ENCODE measurements at regions of chr10 and their contacts with region 1.

Region 1: GRCh38 chr10:76036111-76036940 is 604.9 kb downstream of the LRMDA start:
- DNase-seq: peak; percentile 99
- ATAC-seq: peak; percentile 83
- H3K4me3 ChIP-seq: peak overlapping the region; percentile 27
- H3K27ac ChIP-seq: peak overlapping the region; percentile 6
- H3K4me1 ChIP-seq: peaks cover 23% of the 10 kb centered on the region
- H3K27me3 ChIP-seq: peaks cover 34% of the 10 kb centered on the region
- CTCF ChIP-seq: no peak

Region 2: GRCh38 chr10:75530337-75530736 is 506.0 kb before region 1 on chr10:
- CTCF ChIA-PET with region 1: no interaction called
- POLR2A ChIA-PET with region 1: no interaction called
- intact Hi-C with region 1: loop called (anchors 10 kb)
- DNase-seq: peak; percentile 98
- ATAC-seq: peak; percentile 69
- H3K4me3 ChIP-seq: no peak overlapping the region
- H3K27ac ChIP-seq: peak overlapping the region; percentile 85
- H3K4me1 ChIP-seq: peaks cover 45% of the 10 kb centered on the region
- H3K27me3 ChIP-seq: no peaks in the 10 kb centered on the region
- CTCF ChIP-seq: no peak

Region 3: GRCh38 chr10:75717126-75717916 is 319.0 kb before region 1 on chr10:
- CTCF ChIA-PET with region 1: interaction called, 3 read pairs
- POLR2A ChIA-PET with region 1: no interaction called
- intact Hi-C with region 1: loop called (anchors 2 kb)
- DNase-seq: peak; percentile 74
- ATAC-seq: peak; percentile 76
- H3K4me3 ChIP-seq: no peak overlapping the region
- H3K27ac ChIP-seq: no peak overlapping the region
- H3K4me1 ChIP-seq: peaks cover 7% of the 10 kb centered on the region; the same call in 1 of the 2 replicates
- H3K27me3 ChIP-seq: peaks cover 44% of the 10 kb centered on the region
- CTCF ChIP-seq: peak; percentile 47; the same call in 1 of the 2 replicates

Region 4: DNA sequence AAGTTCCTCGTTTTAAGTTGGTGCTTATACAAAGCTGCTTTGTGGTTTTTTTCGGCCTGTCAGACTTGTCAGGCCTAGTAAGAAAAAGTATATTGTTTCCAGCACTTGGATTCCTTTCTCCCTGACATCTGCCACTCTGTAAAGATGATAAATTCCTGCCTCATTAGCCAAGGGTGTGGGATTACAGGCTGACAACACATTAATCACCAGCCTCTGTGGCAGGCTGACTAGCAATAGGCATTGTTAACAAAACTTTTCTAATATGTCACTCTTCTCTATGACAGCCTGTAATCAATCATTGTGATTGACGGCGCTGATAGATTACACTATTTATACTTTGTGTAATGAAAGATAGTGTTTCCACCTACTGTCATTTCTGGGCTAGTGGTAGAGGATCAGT is 77.6 kb after region 1 on chr10:
- CTCF ChIA-PET with region 1: no interaction called
- POLR2A ChIA-PET with region 1: interaction called, 3 read pairs
- intact Hi-C with region 1: loop called (anchors 2 kb)
- DNase-seq: peak; percentile 98
- ATAC-seq: peak; percentile 76
- H3K4me3 ChIP-seq: peak overlapping the region; percentile 0; the same call in 1 of the 2 replicates
- H3K27ac ChIP-seq: peak overlapping the region; percentile 23
- H3K4me1 ChIP-seq: peaks cover 41% of the 10 kb centered on the region
- H3K27me3 ChIP-seq: peaks cover 51% of the 10 kb centered on the region
- CTCF ChIP-seq: no peak

Region 5: DNA sequence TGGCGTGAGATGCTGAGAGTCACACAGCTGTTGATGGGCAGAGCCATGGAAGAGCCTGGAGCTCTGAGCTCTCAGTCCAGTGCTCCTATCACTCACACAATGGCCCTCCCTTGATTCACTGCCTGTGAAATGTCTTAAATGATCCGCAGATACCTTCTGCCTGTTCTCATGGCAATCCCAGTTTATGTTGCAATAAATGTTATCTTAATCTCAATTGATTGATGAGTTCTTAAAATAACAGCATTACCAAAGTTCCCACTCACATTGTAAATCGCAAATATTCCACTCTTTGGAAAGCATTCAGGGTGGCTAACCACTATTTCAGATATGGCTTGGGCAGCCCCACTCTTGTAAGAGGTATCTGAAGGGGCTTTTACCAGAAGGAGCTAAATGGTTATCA is 260.6 kb after region 1 on chr10:
- CTCF ChIA-PET with region 1: no interaction called
- POLR2A ChIA-PET with region 1: no interaction called
- intact Hi-C with region 1: no loop called
- DNase-seq: no peak
- ATAC-seq: no peak
- H3K4me3 ChIP-seq: no peak overlapping the region
- H3K27ac ChIP-seq: no peak overlapping the region
- H3K4me1 ChIP-seq: no peaks in the 10 kb centered on the region
- H3K27me3 ChIP-seq: peaks cover 29% of the 10 kb centered on the region
- CTCF ChIP-seq: no peak

Region 6: GRCh38 chr10:76547352-76547972 is 511.1 kb after region 1 on chr10:
- CTCF ChIA-PET with region 1: no interaction called
- POLR2A ChIA-PET with region 1: no interaction called
- intact Hi-C with region 1: loop called (anchors 2 kb)
- DNase-seq: peak; percentile 100
- ATAC-seq: peak; percentile 85
- H3K4me3 ChIP-seq: peak overlapping the region; percentile 44
- H3K27ac ChIP-seq: no peak overlapping the region
- H3K4me1 ChIP-seq: peaks cover 5% of the 10 kb centered on the region
- H3K27me3 ChIP-seq: peaks cover 26% of the 10 kb centered on the region
- CTCF ChIP-seq: peak; percentile 100

Region 7: GRCh38 chr10:77111611-77112550 is 1075.6 kb after region 1 on chr10:
- CTCF ChIA-PET with region 1: no interaction called
- POLR2A ChIA-PET with region 1: no interaction called
- intact Hi-C with region 1: loop called (anchors 1 kb)
- DNase-seq: peak; percentile 99
- ATAC-seq: peak; percentile 78
- H3K4me3 ChIP-seq: peak overlapping the region; percentile 4; the same call in 1 of the 2 replicates
- H3K27ac ChIP-seq: peak overlapping the region; percentile 69
- H3K4me1 ChIP-seq: peaks cover 25% of the 10 kb centered on the region
- H3K27me3 ChIP-seq: no peaks in the 10 kb centered on the region
- CTCF ChIP-seq: peak; percentile 100